Aorta (tissue), 5 donors: ENCODE measurements at regions of chr19 and their contacts with region 1.

Region 1: GRCh38 chr19:34345947-34346351 is 19.0 kb upstream of the GPI start:
- DNase-seq: peak; percentile 76 to 86
- ATAC-seq: peak; percentile 70
- H3K4me3 ChIP-seq: no peak overlapping the region
- H3K27ac ChIP-seq: no peak overlapping the region
- H3K4me1 ChIP-seq: no peaks in the 10 kb centered on the region
- H3K27me3 ChIP-seq: no peaks in the 10 kb centered on the region

Region 2: DNA sequence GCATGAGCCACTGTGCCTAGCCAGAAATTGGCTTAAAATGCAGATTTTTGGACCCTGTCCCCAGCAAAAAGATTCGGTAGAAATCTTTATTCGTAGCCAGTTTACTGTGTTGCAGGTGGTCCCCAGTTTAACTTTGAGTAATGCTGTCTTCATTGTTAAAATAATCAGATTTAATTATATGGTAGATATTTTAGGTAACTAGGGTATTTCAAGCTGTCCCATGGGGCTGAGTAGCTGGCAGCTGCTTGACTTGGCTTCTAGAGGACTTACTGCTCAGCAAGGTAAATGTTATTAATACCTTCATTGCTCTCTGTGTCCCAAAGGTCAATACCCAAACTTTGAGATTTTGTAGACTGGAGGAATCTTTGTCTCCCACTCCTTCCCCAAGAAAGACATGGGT is 152.5 kb before region 1 on chr19:
- intact Hi-C with region 1: loop called in 1 of 2 experiments (anchors 10 kb)
- DNase-seq: no peak
- ATAC-seq: no peak
- H3K4me3 ChIP-seq: no peak overlapping the region
- H3K27ac ChIP-seq: no peak overlapping the region
- H3K4me1 ChIP-seq: peaks cover 0 to 6% of the 10 kb centered on the region in 2 donors
- H3K27me3 ChIP-seq: no peaks in the 10 kb centered on the region

Region 3: DNA sequence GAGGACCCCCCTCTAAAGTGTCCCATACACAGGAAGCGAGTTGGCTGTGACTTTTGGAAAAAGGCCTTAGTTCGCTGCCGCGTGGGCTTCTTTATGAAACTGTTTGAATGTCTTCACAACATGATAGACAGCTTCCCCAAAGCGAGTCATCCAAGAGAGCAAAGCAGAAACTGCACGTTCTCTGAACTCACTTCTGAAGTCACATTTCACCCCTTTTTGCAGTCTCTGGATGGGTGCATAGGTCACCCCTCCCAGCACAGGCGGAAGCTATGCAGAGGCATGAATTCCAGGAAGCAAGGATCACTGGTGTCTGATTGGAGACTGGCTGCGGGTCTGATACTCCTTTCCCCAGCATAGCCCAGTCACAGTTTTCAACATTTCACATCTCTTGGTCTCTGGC is 29.6 kb after region 1 on chr19:
- intact Hi-C with region 1: no loop called
- DNase-seq: no peak
- ATAC-seq: no peak
- H3K4me3 ChIP-seq: no peak overlapping the region
- H3K27ac ChIP-seq: no peak overlapping the region
- H3K4me1 ChIP-seq: no peaks in the 10 kb centered on the region
- H3K27me3 ChIP-seq: no peaks in the 10 kb centered on the region

Region 4: GRCh38 chr19:34386645-34387445 is 40.9 kb after region 1 on chr19:
- intact Hi-C with region 1: no loop called
- DNase-seq: no peak
- ATAC-seq: no peak
- H3K4me3 ChIP-seq: no peak overlapping the region
- H3K27ac ChIP-seq: no peak overlapping the region
- H3K4me1 ChIP-seq: no peaks in the 10 kb centered on the region
- H3K27me3 ChIP-seq: no peaks in the 10 kb centered on the region

Region 5: DNA sequence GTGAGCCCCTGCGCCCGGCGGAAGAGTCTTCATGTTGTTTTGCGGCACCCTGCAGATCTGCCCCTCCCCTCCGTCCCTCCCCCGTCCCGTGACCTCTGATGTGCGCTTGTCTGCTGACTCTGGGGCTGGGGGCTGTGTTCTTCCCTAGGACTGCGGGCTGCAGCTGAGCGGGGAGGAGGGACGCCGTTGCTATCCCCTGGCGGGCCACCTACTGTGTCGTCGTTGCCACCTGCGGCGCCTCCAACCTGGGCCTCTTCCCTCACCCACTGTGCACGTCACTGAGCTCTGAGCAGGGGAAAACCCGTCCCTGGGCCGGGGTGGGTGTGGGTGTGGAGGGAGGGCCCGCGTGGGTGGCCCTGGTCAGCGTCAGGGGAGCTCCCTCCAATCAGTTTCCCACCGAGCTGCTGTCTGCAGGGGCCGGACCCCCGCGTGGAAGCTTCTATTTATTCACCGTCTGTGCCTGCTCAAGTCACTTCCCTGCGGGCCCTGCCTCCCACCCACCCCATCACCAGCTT is 154.1 kb after region 1 on chr19:
- intact Hi-C with region 1: no loop called
- DNase-seq: peak in 1 of 2 donors; percentile 71
- ATAC-seq: no peak
- H3K4me3 ChIP-seq: no peak overlapping the region
- H3K27ac ChIP-seq: no peak overlapping the region
- H3K4me1 ChIP-seq: no peaks in the 10 kb centered on the region
- H3K27me3 ChIP-seq: no peaks in the 10 kb centered on the region